Activated CD4-positive, alpha-beta T cell treated with anti-CD3 and anti-CD28 coated beads for 36 hours (primary cell): ENCODE measurements at regions of chr10 and their contacts with region 1.

Region 1: DNA sequence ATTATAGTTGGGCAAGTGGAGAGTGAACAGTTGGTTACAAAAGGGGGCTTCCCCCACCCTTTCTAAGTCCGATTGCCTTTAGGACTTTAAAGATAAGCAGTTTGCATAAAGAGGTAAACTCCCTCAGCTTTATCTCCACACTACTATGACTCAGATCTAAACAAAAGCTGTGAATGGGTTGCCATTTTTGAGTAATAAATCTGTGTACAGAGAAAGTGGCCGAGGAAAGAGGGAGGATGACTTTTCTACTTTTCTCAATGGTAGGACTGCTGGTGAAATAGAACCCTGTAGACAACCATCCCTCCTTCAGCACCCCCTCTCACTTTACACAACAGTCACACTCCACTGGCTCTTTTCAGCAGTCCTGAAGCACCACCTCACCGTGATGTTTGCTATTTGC is 71.2 kb downstream of the DNMBP start:
- DNase-seq: no peak
- ATAC-seq: no peak
- H3K4me3 Mint-ChIP-seq: no peak overlapping the region
- H3K27ac Mint-ChIP-seq: no peak overlapping the region
- H3K4me1 Mint-ChIP-seq: no peaks in the 10 kb centered on the region
- H3K27me3 Mint-ChIP-seq: no peaks in the 10 kb centered on the region

Region 2: DNA sequence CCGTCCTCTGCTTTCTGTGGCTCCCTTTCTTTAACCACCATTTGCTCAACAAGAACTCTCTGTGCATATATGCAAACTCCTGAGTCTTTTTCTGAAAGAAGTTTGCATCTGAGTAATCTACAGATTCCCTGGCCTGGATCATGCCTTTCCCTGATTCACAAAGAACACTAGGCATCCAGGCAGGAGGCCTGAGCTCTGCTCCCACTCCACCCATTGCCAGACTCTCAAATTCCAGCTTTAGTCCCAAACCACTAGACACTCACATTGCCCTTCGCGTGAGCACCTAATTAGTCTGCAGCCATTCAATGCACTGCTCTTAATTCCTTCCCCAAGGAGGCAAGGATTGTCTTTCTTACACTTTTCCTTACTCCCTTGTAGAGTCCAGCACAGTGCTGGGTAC is 95.3 kb before region 1 on chr10:
- CTCF ChIA-PET with region 1: no interaction called
- POLR2A ChIA-PET with region 1: no interaction called
- intact Hi-C with region 1: no loop called
- DNase-seq: no peak
- ATAC-seq: no peak
- H3K4me3 Mint-ChIP-seq: no peak overlapping the region
- H3K27ac Mint-ChIP-seq: no peak overlapping the region
- H3K4me1 Mint-ChIP-seq: peaks cover 3% of the 10 kb centered on the region
- H3K27me3 Mint-ChIP-seq: no peaks in the 10 kb centered on the region

Region 3: GRCh38 chr10:99966306-99966705 is 27.7 kb after region 1 on chr10:
- CTCF ChIA-PET with region 1: no interaction called
- POLR2A ChIA-PET with region 1: no interaction called
- intact Hi-C with region 1: loop called in 1 of 2 experiments (anchors 2 kb)
- DNase-seq: no peak
- ATAC-seq: no peak
- H3K4me3 Mint-ChIP-seq: no peak overlapping the region
- H3K27ac Mint-ChIP-seq: no peak overlapping the region
- H3K4me1 Mint-ChIP-seq: no peaks in the 10 kb centered on the region
- H3K27me3 Mint-ChIP-seq: no peaks in the 10 kb centered on the region

Region 4: GRCh38 chr10:100009793-100010676 is 71.5 kb after region 1 on chr10 and contains the start of gene DNMBP:
- CTCF ChIA-PET with region 1: no interaction called
- POLR2A ChIA-PET with region 1: no interaction called
- intact Hi-C with region 1: no loop called
- DNase-seq: peak; percentile 91
- ATAC-seq: peak; percentile 91
- H3K4me3 Mint-ChIP-seq: peak within 1 kb of the TSS; percentile 74
- H3K27ac Mint-ChIP-seq: peak within 1 kb of the TSS; percentile 79
- H3K4me1 Mint-ChIP-seq: peaks cover 46% of the 10 kb centered on the region
- H3K27me3 Mint-ChIP-seq: peaks cover 8% of the 10 kb centered on the region
- total RNA-seq, gene DNMBP: 1.9 to 2.4 TPM